Activated CD8-positive, alpha-beta T cell treated with anti-CD3 and anti-CD28 coated beads, Interleukin-2, amount 10 ng/mL, durations not matched to agents 7 days and 5 days (primary cell): ENCODE measurements at regions of chr20 and their contacts with region 1.

Region 1: DNA sequence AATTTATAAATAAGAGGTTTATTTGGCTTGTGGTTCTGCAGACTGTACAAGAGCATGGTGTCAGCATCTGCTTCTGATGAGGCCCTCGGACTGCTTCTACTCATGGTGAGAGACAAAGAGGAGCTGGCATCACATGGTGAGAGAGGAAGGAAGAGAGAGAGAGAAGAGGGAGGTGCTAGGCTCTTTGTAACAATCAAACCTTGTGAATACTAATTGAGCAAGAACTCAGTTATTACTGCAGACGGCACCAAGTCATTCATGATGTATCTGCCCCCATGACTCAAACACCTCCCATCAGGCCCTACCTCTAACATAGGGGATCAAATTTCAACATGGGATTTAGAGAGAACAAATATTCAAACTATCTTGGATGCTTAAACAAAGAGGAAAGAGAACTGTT is 6.3 kb upstream of the SIRPG start:
- DNase-seq: peak; percentile 33
- ATAC-seq: no peak
- H3K4me3 Mint-ChIP-seq: peak overlapping the region; percentile 1
- H3K27ac Mint-ChIP-seq: peak overlapping the region; percentile 87
- H3K4me1 Mint-ChIP-seq: peaks cover 95% of the 10 kb centered on the region
- H3K27me3 Mint-ChIP-seq: no peaks in the 10 kb centered on the region

Region 2: DNA sequence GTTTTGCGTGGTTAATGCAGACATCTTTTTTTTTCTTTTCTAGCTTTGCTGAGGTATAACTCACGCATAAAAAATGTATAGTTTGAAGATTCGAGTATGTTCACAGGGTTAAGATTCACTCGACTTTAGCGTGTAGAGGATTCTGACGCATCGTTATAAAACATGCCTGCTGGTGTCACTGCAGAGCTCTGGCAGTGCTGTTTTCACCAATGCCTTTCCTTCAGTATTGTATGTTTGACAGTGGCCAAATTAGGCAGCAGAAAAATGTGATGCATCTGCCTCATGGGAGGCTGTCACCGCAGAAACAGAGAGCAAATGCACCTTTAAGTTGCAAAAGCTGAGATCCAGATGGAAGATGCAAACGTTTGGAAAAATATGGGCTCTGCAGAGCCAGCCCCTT is 154.7 kb before region 1 on chr20:
- CTCF ChIA-PET with region 1: interaction called, 10 read pairs
- POLR2A ChIA-PET with region 1: no interaction called
- DNase-seq: peak; percentile 62
- ATAC-seq: peak; percentile 51
- H3K4me3 Mint-ChIP-seq: no peak overlapping the region
- H3K27ac Mint-ChIP-seq: no peak overlapping the region
- H3K4me1 Mint-ChIP-seq: no peaks in the 10 kb centered on the region
- H3K27me3 Mint-ChIP-seq: peaks cover 32% of the 10 kb centered on the region

Region 3: GRCh38 chr20:1637755-1638154 is 26.2 kb before region 1 on chr20:
- CTCF ChIA-PET with region 1: no interaction called
- POLR2A ChIA-PET with region 1: no interaction called
- DNase-seq: no peak
- ATAC-seq: no peak
- H3K4me3 Mint-ChIP-seq: no peak overlapping the region
- H3K27ac Mint-ChIP-seq: no peak overlapping the region
- H3K4me1 Mint-ChIP-seq: peaks cover 38% of the 10 kb centered on the region
- H3K27me3 Mint-ChIP-seq: no peaks in the 10 kb centered on the region

Region 4: DNA sequence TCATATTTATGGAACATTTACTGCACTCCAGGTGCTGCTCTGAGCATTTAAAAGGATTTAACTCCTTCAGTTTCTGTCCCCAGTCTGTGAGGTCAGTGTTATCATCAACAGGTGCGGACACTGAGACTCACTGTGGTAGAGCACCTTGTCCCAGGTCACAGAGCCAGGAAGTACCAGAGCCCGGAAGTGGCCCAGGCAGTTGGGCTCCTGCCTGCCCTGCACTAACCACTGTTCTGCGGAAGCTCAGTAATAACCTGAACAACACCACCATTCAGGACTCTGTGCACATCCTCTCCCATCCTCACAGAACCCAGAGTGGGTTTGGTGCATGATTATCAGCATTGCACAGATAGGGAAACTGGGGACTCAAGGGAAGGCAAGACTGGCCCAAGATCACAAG is 10.4 kb after region 1 on chr20:
- CTCF ChIA-PET with region 1: interaction called, 18 read pairs
- POLR2A ChIA-PET with region 1: interaction called, 17 read pairs
- DNase-seq: peak; percentile 81
- ATAC-seq: peak; percentile 86
- H3K4me3 Mint-ChIP-seq: peak overlapping the region; percentile 52
- H3K27ac Mint-ChIP-seq: peak overlapping the region; percentile 87
- H3K4me1 Mint-ChIP-seq: peaks cover 99% of the 10 kb centered on the region
- H3K27me3 Mint-ChIP-seq: no peaks in the 10 kb centered on the region

Region 5: DNA sequence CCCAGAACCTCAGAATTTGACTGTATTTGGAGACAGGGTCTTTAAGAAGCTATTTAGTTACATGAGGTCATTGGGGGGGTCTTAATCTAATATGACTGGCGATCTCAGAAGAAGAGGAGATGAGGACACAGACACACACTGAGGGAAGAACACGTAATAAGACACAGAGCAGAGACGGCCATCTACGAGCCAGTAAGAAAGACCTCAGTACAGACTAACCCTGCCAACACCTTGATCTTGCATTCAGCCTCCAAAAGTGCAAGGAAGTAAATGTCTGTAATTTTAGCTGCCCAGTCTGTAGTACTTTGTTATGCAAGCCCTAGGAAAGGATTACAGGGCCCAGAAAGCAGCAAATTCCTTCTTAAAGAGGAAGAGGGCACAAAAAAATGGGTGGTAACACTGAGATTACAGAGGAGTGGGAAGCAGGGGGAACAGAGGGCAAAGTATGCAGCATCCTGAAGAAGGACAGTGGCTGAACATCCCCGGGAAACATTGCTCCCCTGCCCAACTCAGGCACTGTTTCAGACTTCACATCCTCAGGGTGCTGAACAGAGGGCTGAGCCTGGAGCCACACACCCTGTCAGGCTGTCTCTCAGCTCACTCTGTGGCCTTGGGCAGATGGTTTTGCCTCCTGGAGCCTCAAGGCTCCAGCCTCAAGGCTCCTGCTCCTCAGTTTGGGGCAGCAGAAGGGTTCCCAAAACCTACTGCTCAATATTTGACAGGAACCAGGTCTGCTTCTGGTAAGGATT is 21.6 kb after region 1 on chr20:
- CTCF ChIA-PET with region 1: interaction called, 5 read pairs
- POLR2A ChIA-PET with region 1: interaction called, 13 read pairs
- DNase-seq: peak; percentile 47
- ATAC-seq: peak; percentile 77
- H3K4me3 Mint-ChIP-seq: peak overlapping the region; percentile 73
- H3K27ac Mint-ChIP-seq: peak overlapping the region; percentile 84
- H3K4me1 Mint-ChIP-seq: peaks cover 66% of the 10 kb centered on the region
- H3K27me3 Mint-ChIP-seq: no peaks in the 10 kb centered on the region